H1 (cell line): ENCODE measurements at regions of chr2 and their contacts with region 1.

Region 1: GRCh38 chr2:237165405-237166276 is 80.0 kb downstream of the COPS8 start:
- DNase-seq: peak in 1 of 2 experiments; percentile 63
- H3K4me3 ChIP-seq: no peak overlapping the region
- H3K27ac ChIP-seq: no peak overlapping the region
- H3K4me1 ChIP-seq: no peaks in the 10 kb centered on the region
- H3K27me3 ChIP-seq: no peaks in the 10 kb centered on the region
- CTCF ChIP-seq: peak; percentile 32 to 85 (median 83)
- EP300 ChIP-seq: no peak
- POLR2A ChIP-seq: no peak
- RAD21 ChIP-seq: peak; percentile 78 to 85

Region 2: GRCh38 chr2:237154082-237154638 is 11.5 kb before region 1 on chr2:
- CTCF ChIA-PET with region 1: interaction called, 16 read pairs
- POLR2A ChIA-PET with region 1: no interaction called
- DNase-seq: peak in 1 of 2 experiments; percentile 67
- H3K4me3 ChIP-seq: no peak overlapping the region
- H3K27ac ChIP-seq: no peak overlapping the region
- H3K4me1 ChIP-seq: no peaks in the 10 kb centered on the region; a peak in 2 of 7 replicates
- H3K27me3 ChIP-seq: no peaks in the 10 kb centered on the region
- CTCF ChIP-seq: peak; percentile 69 to 91 (median 78)
- EP300 ChIP-seq: no peak
- POLR2A ChIP-seq: no peak
- RAD21 ChIP-seq: peak; percentile 99

Region 3: GRCh38 chr2:237256887-237257286 is 91.2 kb after region 1 on chr2:
- CTCF ChIA-PET with region 1: interaction called, 22 read pairs
- POLR2A ChIA-PET with region 1: no interaction called
- DNase-seq: no peak
- H3K4me3 ChIP-seq: no peak overlapping the region
- H3K27ac ChIP-seq: no peak overlapping the region
- H3K4me1 ChIP-seq: peaks cover 0 to 4% (median 0%) of the 10 kb centered on the region in 4 experiments; a peak in 1 of 7 replicates
- H3K27me3 ChIP-seq: no peaks in the 10 kb centered on the region
- CTCF ChIP-seq: no peak
- EP300 ChIP-seq: no peak
- POLR2A ChIP-seq: no peak
- RAD21 ChIP-seq: no peak

Region 4: DNA sequence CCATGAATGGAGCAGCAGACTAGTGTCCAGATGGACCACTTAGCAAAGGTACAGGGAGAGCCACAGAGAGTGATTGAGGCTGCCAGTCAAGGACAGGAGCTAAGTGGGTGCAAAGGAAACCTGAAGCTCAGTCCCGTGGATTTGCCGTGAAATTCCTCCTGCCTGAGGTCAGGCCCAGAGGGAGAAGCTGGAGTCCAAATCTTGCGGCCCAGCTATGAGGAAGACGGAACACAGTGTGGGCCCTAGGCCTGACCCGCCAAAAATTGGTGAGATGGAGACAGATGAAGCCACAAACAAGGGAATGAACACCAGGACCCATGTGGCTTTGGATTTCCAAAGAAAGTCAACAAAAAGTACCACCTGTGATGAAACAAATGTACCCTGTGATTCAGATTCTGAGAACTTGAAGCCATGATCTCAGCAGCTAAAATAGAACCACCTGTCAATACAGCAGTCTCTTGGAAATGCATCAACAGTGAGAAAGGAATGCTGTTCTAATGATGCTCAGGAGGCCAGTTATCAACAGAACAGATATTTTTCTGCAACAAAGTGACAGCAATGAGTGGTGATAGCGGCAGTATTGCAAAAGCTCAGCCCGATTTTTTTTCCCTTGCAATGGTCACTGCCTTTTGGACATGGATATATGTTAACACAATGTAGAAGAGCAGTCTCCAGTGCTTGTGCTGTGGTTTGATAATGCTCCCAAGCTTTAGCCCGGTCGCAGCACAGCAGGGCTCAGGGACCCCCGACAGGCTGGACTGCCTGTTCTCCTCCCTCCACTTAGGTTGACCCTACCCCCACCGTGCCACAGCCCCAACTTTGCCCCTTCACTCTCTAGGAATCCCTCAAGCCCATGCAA is 237.6 kb after region 1 on chr2:
- CTCF ChIA-PET with region 1: interaction called, 11 read pairs
- POLR2A ChIA-PET with region 1: no interaction called
- DNase-seq: no peak
- H3K4me3 ChIP-seq: no peak overlapping the region
- H3K27ac ChIP-seq: no peak overlapping the region
- H3K4me1 ChIP-seq: no peaks in the 10 kb centered on the region
- H3K27me3 ChIP-seq: no peaks in the 10 kb centered on the region
- CTCF ChIP-seq: no peak
- EP300 ChIP-seq: no peak
- POLR2A ChIP-seq: no peak
- RAD21 ChIP-seq: no peak

Region 5: GRCh38 chr2:237421542-237422116 is 256.0 kb after region 1 on chr2:
- CTCF ChIA-PET with region 1: interaction called, 15 read pairs
- POLR2A ChIA-PET with region 1: no interaction called
- DNase-seq: peak; percentile 65 to 92
- H3K4me3 ChIP-seq: no peak overlapping the region
- H3K27ac ChIP-seq: no peak overlapping the region
- H3K4me1 ChIP-seq: no peaks in the 10 kb centered on the region; a peak in 1 of 7 replicates
- H3K27me3 ChIP-seq: no peaks in the 10 kb centered on the region; a peak in 1 of 7 replicates
- CTCF ChIP-seq: peak; percentile 89 to 92 (median 89)
- EP300 ChIP-seq: no peak
- POLR2A ChIP-seq: no peak
- RAD21 ChIP-seq: peak; percentile 70 to 77

Region 6: GRCh38 chr2:237474931-237475703 is 309.5 kb after region 1 on chr2:
- CTCF ChIA-PET with region 1: interaction called, 14 read pairs
- POLR2A ChIA-PET with region 1: no interaction called
- DNase-seq: peak in 1 of 2 experiments; percentile 97
- H3K4me3 ChIP-seq: peak overlapping the region; percentile 53 to 96 (median 64)
- H3K27ac ChIP-seq: peak overlapping the region; percentile 61; the same call in 1 of the 2 replicates
- H3K4me1 ChIP-seq: peaks cover 0 to 13% (median 7%) of the 10 kb centered on the region in 4 experiments; a peak in 4 of 7 replicates
- H3K27me3 ChIP-seq: peaks cover 0 to 7% (median 7%) of the 10 kb centered on the region in 4 experiments; a peak in 3 of 7 replicates
- CTCF ChIP-seq: peak; percentile 63 to 90 (median 77)
- EP300 ChIP-seq: no peak
- POLR2A ChIP-seq: peak in 1 of 2 experiments; percentile 59; a peak in 1 of 3 replicates
- RAD21 ChIP-seq: peak; percentile 46 to 70; a peak in 3 of 4 replicates